H1 (cell line): ENCODE measurements at regions of chr2 and their contacts with region 1.

Region 1: GRCh38 chr2:37389989-37390765 is 45.7 kb downstream of the QPCT start:
- DNase-seq: peak; percentile 15 to 44
- H3K4me3 ChIP-seq: no peak overlapping the region
- H3K27ac ChIP-seq: no peak overlapping the region
- H3K4me1 ChIP-seq: peaks cover 0 to 9% (median 0%) of the 10 kb centered on the region in 4 experiments; a peak in 4 of 7 replicates
- H3K27me3 ChIP-seq: no peaks in the 10 kb centered on the region
- CTCF ChIP-seq: no peak
- EP300 ChIP-seq: no peak
- POLR2A ChIP-seq: no peak
- RAD21 ChIP-seq: no peak

Region 2: GRCh38 chr2:37215250-37215649 is 174.9 kb before region 1 on chr2:
- CTCF ChIA-PET with region 1: no interaction called
- POLR2A ChIA-PET with region 1: no interaction called
- DNase-seq: no peak
- H3K4me3 ChIP-seq: no peak overlapping the region
- H3K27ac ChIP-seq: no peak overlapping the region
- H3K4me1 ChIP-seq: no peaks in the 10 kb centered on the region
- H3K27me3 ChIP-seq: no peaks in the 10 kb centered on the region
- CTCF ChIP-seq: no peak
- EP300 ChIP-seq: no peak
- POLR2A ChIP-seq: no peak
- RAD21 ChIP-seq: no peak

Region 3: GRCh38 chr2:37402636-37403035 is 12.5 kb after region 1 on chr2:
- CTCF ChIA-PET with region 1: interaction called, 13 read pairs
- POLR2A ChIA-PET with region 1: no interaction called
- DNase-seq: no peak
- H3K4me3 ChIP-seq: no peak overlapping the region
- H3K27ac ChIP-seq: no peak overlapping the region
- H3K4me1 ChIP-seq: no peaks in the 10 kb centered on the region
- H3K27me3 ChIP-seq: no peaks in the 10 kb centered on the region
- CTCF ChIP-seq: no peak
- EP300 ChIP-seq: no peak
- POLR2A ChIP-seq: no peak
- RAD21 ChIP-seq: no peak

Region 4: DNA sequence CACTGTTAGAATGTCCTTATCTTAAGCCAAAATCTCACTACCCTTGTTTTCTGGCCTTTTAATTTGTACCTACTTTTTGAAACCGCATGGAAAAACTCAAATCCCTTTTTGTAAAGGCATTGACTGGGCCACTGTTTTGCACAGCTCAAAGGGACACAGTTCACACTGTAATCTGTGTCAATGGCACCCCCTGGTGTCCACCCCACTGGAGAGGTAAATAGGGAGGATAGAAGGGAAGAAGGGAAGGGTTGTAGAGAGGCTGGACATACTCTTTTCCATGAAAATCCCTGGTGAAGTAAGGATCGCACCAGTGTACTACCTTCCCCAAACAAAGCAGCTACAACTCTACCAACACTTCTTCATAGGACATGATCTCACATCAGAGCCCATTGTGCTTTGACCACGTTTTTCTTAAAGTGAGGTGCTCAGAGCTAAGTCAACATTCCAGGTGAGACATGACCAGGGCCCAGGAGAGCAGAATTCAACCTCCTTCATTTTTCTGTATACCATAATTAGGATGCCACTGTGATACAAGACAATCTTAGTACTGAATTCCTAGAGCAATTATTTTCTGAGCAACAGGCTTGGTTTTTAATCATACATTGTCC is 442.5 kb after region 1 on chr2:
- CTCF ChIA-PET with region 1: interaction called, 31 read pairs
- POLR2A ChIA-PET with region 1: no interaction called
- DNase-seq: peak; percentile 41 to 85
- H3K4me3 ChIP-seq: no peak overlapping the region
- H3K27ac ChIP-seq: no peak overlapping the region
- H3K4me1 ChIP-seq: no peaks in the 10 kb centered on the region
- H3K27me3 ChIP-seq: no peaks in the 10 kb centered on the region
- CTCF ChIP-seq: peak; percentile 61 to 78 (median 73)
- EP300 ChIP-seq: no peak
- POLR2A ChIP-seq: no peak
- RAD21 ChIP-seq: peak; percentile 93 to 95

Region 5: GRCh38 chr2:37890893-37891495 is 500.8 kb after region 1 on chr2:
- CTCF ChIA-PET with region 1: interaction called, 33 read pairs
- POLR2A ChIA-PET with region 1: no interaction called
- DNase-seq: peak; percentile 23 to 88
- H3K4me3 ChIP-seq: no peak overlapping the region
- H3K27ac ChIP-seq: no peak overlapping the region
- H3K4me1 ChIP-seq: peaks cover 0 to 3% (median under 1%) of the 10 kb centered on the region in 4 experiments; a peak in 3 of 7 replicates
- H3K27me3 ChIP-seq: no peaks in the 10 kb centered on the region
- CTCF ChIP-seq: peak; percentile 78 to 89 (median 85)
- EP300 ChIP-seq: no peak
- POLR2A ChIP-seq: no peak
- RAD21 ChIP-seq: peak; percentile 86 to 93